Right lobe of liver (tissue), 6 donors: ENCODE measurements at regions of chr12 and their contacts with region 1.

Region 1: DNA sequence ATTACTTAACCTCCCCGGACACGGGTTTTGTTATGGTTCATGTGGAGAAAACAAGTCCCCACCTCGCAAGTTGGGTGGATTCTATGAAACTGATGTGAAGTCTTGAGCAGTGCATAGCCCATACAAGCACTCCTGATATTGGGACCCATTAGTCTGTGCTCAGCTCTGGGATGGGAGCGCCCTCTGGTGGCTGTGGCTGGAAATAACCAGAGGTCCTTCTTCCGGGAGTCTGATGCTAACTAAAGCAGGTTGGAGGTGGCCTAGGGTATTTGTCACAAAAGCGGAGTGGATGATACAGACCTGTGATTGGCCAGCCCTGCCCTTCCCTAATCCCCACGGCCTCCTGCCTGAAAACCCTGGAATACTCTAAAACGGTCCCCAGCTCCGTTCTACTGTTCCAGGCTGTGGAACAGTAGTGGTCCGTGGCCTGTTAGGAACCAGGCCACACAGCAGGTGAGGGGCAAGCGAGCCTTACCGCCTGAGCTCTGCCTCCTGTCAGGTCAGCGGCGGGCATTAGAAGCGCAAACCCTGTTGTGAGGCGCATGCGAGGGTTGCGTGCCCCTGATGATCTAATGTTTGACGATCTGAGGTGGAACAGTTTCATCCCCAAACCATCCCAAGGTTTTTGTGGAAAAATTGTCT is 6.4 kb downstream of the SLC48A1 start:
- DNase-seq: peak; percentile 86 to 88 (median 87)
- ATAC-seq: peak; percentile 82 to 91 (median 86)
- H3K4me3 ChIP-seq: no peak overlapping the region
- H3K27ac ChIP-seq: no peak overlapping the region
- H3K4me1 ChIP-seq: peaks cover 0 to 15% (median 0%) of the 10 kb centered on the region in 4 donors
- H3K27me3 ChIP-seq: no peaks in the 10 kb centered on the region
- CTCF ChIP-seq: peak; percentile 94 to 97 (median 96)
- POLR2A ChIP-seq: no peak

Region 2: GRCh38 chr12:47742253-47742825 is 37.1 kb before region 1 on chr12:
- intact Hi-C with region 1: loop called in 1 of 2 experiments (anchors 5 kb)
- DNase-seq: peak in 1 of 3 donors; percentile 53
- ATAC-seq: peak; percentile 9 to 46 (median 44)
- H3K4me3 ChIP-seq: no peak overlapping the region
- H3K27ac ChIP-seq: no peak overlapping the region
- H3K4me1 ChIP-seq: peaks cover 0 to 5% (median 5%) of the 10 kb centered on the region in 4 donors
- H3K27me3 ChIP-seq: no peaks in the 10 kb centered on the region
- CTCF ChIP-seq: peak; percentile 91 to 95 (median 92)
- POLR2A ChIP-seq: no peak